Astrocyte of the cerebellum (primary cell): ENCODE measurements at regions of chr7 and their contacts with region 1.

Region 1: GRCh38 chr7:134875867-134876266 is 96.4 kb downstream of the CALD1 start:
- DNase-seq: no peak
- H3K4me3 ChIP-seq: no peak overlapping the region
- CTCF ChIP-seq: no peak

Region 2: DNA sequence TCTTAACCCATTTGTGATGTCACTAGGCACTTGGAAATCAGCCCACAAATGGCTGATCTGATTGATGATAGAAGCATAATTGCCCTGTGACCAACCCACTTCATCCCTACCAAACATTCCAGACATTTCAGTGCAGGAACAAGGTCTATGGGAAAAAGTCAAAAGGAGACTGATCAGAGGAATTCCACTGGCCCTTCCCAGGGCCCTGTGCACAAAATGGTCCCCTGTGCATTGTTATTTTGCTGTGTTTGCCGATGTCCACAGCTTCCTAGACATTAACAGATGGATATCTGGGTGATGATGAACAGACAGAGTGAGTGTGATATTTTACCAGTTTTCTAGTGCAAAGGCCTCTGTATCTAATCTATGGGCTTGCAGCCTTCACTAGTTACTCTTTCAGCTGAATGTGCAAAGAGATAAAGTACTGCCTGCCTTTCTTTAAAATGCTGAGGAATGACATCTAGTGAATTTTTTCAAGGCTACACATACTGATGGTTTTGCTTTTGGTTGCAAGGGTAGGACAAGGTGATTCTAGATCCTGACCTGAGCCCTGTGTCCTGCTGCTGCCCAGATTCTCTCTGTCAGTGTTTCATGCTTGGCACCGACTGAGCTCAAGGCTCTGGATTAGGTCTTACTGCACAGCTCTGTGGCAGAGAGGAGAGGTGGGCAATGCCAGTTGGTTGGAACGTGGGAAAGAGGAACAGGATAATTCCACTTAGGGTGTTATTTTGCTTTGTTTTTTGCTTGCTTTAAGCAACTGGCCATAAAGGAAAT is 41.0 kb before region 1 on chr7:
- in situ Hi-C with region 1: loop called (anchors 5 kb)
- DNase-seq: no peak
- H3K4me3 ChIP-seq: no peak overlapping the region
- CTCF ChIP-seq: no peak

Region 3: DNA sequence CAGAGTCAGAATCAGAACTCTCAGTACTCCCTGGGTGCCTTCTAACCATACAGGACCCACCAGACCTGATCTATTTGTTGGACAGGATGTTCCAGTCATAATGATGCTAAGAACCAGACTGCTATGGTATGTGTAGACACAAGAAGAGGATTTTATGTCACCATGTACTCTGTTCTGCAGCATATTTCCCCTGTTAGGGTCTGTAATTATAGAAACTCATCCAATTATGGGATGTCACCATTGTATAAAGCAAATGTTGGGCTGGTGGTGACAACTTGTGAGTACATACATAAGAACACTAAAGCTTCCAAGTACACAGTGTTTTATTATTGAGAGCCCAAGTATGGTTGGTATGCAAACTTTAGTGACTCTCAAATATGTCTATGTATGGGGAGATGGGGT is 43.4 kb after region 1 on chr7:
- in situ Hi-C with region 1: no loop called
- DNase-seq: no peak
- H3K4me3 ChIP-seq: no peak overlapping the region
- CTCF ChIP-seq: no peak

Region 4: DNA sequence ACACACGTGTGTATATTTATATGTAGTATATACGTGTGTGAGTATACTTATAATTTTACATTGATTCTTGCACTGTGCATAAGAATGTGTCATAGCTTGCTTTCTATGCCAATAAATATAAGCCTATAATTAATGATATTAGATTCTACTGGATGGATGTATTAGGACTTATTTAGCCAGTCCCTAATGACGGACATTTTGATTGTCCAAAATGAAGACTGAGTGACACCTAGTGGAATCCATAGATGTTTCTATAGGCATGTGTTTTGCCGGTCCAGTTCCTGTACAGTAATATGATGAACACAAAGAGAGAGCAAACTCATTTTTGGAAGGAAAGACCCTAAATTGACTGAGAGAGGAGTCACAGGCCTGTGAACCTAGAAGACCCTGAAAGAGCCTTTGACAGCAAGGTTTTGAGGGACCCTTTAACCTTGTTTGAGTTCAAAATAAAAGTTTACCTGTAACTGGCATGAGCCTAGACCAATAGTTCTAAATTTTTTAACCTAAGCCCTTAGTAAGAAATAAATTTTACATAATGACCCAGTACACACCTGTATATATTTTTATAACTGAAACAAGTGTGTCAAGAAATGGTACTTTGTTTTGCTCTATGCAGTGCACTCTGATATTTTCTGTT is 68.0 kb after region 1 on chr7:
- in situ Hi-C with region 1: no loop called
- DNase-seq: no peak
- H3K4me3 ChIP-seq: no peak overlapping the region
- CTCF ChIP-seq: peak; percentile 18